Head of caudate nucleus (tissue), 42 donors: ENCODE measurements at regions of chr19 and their contacts with region 1.

Region 1: GRCh38 chr19:11293433-11294389 is 2.2 kb upstream of the TSPAN16 start:
- DNase-seq: peak; percentile 78 to 96 (median 92)

Region 2: GRCh38 chr19:11179716-11180297 is 113.9 kb before region 1 on chr19:
- intact Hi-C with region 1: no loop called
- DNase-seq: no peak

Region 3: DNA sequence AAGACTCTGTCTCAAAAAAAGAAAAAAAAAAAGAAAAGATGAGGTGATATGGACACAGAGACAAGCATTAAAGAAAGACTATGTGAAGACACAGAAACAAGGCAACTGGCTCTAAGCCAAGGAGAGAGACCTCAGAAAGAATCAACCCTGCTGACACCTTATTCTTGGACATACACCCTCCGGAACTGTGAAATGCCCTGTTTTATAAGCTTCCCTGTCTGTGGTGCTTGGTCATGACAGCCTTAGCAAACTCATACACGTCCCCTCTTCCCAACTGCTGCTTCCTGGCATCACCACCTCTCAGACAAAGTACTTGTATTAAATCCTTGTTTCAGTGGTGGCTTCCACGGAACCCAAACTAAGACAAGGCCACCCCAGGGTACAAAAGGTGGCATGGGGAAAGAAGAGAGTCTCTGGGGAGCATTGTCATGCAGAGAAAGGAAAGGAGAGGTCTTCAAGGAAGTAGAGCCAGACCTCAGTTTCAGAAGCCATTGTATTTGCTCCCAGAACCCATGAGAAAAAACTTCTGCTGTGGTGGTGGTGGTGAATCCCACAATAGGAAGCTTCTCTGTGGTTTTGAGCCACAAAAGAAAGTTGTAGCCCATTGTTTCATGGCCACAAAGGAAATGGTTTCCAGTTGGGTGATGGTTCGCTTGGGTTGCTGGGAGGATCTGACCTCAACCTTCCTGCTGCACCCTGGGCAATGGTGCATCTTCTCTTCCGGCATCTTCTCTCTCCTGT is 14.0 kb before region 1 on chr19:
- intact Hi-C with region 1: no loop called
- DNase-seq: no peak

Region 4: DNA sequence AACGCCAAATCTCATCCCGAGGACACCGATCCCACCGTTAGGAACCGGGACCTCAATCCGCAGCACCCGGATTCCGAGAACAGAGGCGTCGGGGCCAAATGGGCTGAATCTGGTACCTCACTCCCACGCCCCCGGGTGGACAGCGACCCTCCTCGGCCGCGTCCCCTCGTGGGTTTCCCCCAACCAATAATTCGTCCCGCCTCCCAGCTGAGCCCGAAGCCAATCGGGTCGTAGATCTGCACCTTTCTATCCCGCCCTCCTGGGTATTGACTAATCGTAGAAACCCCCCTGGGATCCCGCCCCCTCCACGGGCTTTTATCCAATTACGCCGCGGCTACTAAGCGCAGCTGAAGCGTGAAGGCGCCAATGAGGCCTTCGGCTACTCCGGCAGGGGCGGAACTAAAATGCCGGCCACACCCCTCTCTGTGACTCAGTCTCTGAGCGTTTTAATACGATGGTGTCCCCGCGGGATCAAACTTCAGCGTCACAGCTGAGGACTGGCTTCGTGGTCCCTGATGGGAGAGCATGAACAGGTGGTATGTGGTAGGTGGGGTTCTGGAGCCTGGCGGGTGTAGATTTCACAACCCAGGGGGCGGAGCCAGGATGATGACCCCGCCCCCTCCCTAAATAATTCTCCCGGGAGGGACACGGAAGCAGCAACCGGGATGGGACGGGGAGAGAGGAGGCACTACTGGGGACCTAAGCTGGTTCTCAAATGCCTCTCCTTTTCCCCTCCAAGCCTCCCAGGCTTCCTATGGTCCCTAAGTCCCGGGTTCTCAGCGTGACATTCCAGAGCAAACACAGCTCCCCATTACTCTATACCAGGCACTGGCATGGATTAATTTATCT is 52.6 kb after region 1 on chr19 and contains the starts of genes CCDC159 and TMEM205:
- intact Hi-C with region 1: loop called (anchors 10 kb)
- DNase-seq: peak; percentile 97 to 100 (median 99)

Region 5: DNA sequence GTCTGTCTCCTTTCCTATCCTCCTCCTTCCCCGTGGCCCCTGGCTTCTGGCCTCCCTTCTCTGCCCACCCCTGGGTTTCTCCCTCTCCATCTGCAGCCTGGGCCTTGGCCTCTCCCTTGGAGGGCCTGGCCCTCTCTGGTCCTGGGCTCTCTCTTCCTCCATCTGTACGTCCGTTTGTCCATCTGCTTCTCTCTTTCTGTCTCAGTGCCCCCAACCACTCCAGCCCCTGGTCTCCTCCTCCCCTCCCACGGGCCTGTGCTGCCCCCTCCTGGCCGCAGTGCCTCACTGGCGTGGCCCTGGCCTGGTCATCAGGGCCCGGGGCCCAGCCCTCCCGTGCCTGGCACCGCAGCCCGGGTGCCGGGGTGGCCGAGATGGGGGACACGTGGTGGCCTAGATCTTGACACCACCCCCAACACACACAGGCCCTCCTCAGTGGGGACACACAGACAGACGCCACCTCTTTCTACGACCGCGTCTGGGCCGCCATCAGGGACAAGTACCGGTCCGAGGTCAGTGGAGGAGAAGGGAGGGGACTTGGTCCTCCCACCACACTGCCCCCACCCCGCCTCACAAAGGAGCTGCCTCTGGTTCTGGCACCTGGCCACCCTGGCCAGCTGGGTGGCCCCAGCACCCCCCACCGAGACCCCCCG is 153.1 kb after region 1 on chr19:
- intact Hi-C with region 1: loop called (anchors 5 kb)
- DNase-seq: peak; percentile 73 to 96 (median 88)

Region 6: DNA sequence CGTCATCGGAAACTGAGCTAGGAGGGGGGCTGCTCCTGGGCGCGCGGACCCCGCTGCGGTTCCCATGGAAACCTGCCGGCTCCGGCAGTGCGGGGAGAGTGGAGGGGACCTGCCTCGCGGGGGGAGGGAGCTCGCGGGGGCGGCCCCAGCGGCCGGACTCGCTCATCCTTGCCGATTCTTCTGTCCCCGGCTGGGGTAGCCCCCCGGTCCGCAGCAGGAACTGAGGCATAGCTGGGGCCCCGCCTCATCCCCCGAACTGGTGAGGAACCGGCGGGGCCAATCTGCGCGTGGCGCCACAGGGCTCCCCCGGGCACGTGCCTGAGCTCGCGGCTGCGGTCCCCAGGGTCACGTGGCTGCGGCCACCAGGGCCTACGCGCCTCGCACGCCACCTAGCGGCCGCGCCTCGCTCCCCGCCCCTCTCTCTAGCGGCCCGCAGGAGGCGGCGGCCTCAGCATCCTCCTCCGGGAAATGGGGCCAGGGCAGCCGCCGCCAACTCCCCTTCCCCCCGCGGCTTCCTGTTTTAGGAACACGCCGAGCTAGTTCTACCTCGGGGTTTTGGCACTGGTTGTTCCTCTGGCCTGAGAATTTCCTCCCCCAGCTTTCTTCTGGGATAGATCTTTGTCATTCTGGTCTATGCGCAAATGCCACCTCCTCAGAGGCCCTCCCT is 188.8 kb after region 1 on chr19:
- intact Hi-C with region 1: loop called (anchors 10 kb)
- DNase-seq: peak; percentile 75 to 96 (median 91)